Mammary epithelial cell (primary cell): ENCODE measurements at regions of chr4 and their contacts with region 1.

Region 1: GRCh38 chr4:98474408-98474844 is 184.0 kb downstream of the TSPAN5 start:
- DNase-seq: peak; percentile 76
- H3K4me3 ChIP-seq: no peak overlapping the region
- H3K27ac ChIP-seq: no peak overlapping the region
- H3K4me1 ChIP-seq: peaks cover 36% of the 10 kb centered on the region
- H3K27me3 ChIP-seq: no peaks in the 10 kb centered on the region
- CTCF ChIP-seq: no peak

Region 2: GRCh38 chr4:98512918-98513317 is 38.5 kb after region 1 on chr4:
- CTCF ChIA-PET with region 1: interaction called, 11 read pairs
- dilution Hi-C with region 1: no loop called
- in situ Hi-C with region 1: no loop called
- intact Hi-C with region 1: no loop called
- DNase-seq: no peak
- H3K4me3 ChIP-seq: no peak overlapping the region
- H3K27ac ChIP-seq: no peak overlapping the region
- H3K4me1 ChIP-seq: peaks cover 47% of the 10 kb centered on the region
- H3K27me3 ChIP-seq: no peaks in the 10 kb centered on the region
- CTCF ChIP-seq: no peak